ENCODE measurements at regions of chr3 and their contacts with region 1.

Region 1: GRCh38 chr3:48989796-48990635 is at the start of gene P4HTM:
- DNase-seq: peak; percentile 87
- H3K4me3 ChIP-seq: peak within 1 kb of the TSS; percentile 80
- H3K27ac ChIP-seq: peak within 1 kb of the TSS; percentile 99
- H3K27me3 ChIP-seq: no peaks in the 10 kb centered on the region
- CTCF ChIP-seq: peak; percentile 59
- polyA plus RNA-seq, gene P4HTM: 18.2 and 22.5 TPM in 2 replicates

Region 2: GRCh38 chr3:48974076-48974864 is 15.7 kb before region 1 on chr3:
- CTCF ChIA-PET with region 1: interaction called, 12 read pairs
- POLR2A ChIA-PET with region 1: no interaction called
- DNase-seq: no peak
- H3K4me3 ChIP-seq: no peak overlapping the region
- H3K27ac ChIP-seq: no peak overlapping the region
- H3K27me3 ChIP-seq: no peaks in the 10 kb centered on the region
- CTCF ChIP-seq: no peak

Region 3: DNA sequence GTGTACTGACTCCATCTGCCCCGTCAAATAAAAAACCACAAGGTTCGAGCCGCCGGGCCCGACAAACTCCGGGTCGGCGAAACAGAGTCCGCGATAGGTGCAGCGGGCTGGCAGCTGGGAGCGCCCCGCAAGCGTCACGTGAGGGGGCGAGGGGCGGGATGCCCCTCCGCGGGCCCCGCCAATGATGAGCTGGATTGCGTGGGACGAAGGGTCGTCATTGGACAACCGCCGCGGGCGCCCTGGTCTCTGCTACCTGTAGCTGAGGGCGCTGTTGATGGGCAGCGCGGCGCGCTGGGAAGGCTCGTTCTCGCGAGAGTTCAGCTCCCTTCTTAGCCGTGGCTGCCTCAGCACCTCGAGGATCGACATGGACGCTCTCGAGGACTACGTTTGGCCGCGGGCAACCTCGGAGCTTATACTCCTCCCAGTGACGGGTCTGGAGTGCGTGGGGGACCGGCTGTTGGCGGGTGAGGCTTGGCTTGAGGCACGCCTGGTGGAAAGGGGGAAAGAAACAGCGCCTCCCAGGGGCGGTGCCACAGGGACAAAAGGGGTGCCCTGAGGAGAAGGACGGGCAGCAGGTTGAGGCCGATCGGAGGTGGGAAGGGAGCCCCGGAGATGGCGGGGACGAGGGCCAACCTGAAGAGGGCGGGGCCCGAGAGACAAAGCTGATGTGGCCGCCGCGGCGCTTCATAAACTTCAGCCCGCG is 17.2 kb after region 1 on chr3 and contains the start of gene WDR6:
- CTCF ChIA-PET with region 1: interaction called, 18 read pairs
- POLR2A ChIA-PET with region 1: interaction called, 70 read pairs
- DNase-seq: peak; percentile 96
- H3K4me3 ChIP-seq: peak within 1 kb of the TSS; percentile 93
- H3K27ac ChIP-seq: peak within 1 kb of the TSS; percentile 98
- H3K27me3 ChIP-seq: no peaks in the 10 kb centered on the region
- CTCF ChIP-seq: peak; percentile 35; the same call in 1 of the 2 replicates
- polyA plus RNA-seq, gene WDR6: 101 and 117 TPM in 2 replicates

Region 4: GRCh38 chr3:49013755-49014628 is 24.0 kb after region 1 on chr3:
- CTCF ChIA-PET with region 1: interaction called, 19 read pairs
- POLR2A ChIA-PET with region 1: interaction called, 6 read pairs
- DNase-seq: no peak
- H3K4me3 ChIP-seq: no peak overlapping the region
- H3K27ac ChIP-seq: no peak overlapping the region
- H3K27me3 ChIP-seq: no peaks in the 10 kb centered on the region
- CTCF ChIP-seq: peak; percentile 67

Region 5: DNA sequence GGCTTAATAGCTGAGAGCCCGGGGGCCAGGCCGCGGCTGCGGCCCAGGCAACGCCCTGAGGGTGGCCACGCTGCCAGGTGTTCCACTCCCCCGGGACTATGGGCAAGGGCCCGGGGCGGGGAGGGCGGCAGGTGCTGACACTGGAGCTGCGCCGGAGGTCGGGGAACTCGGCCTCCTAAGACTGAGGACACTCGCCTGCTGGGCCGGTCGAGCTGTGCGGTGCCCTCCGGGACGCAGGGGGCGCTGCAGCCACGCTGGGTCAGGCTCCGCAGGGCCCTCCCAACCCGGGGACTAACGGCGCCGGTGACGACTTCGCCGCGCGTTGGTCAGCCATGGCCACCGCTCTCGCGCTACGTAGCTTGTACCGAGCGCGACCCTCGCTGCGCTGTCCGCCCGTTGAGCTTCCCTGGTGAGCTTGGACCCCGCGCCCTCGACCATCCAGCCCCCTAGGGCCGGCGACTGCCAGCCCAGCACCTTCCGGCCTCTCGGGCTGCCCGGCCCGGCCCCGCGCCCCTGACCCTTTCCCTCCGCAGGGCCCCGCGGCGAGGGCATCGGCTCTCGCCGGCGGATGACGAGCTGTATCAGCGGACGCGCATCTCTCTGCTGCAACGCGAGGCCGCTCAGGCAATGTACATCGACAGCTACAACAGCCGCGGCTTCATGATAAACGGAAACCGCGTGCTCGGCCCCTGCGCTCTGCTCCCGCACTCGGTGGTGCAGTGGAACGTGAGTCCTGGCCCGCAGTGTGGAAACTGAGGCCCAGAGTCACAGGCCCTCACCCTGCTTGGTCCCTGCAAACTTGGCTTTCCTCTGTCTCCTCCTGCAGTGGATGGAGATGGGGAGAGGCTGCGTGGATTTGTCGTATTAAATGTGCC is 32.0 kb after region 1 on chr3 and contains the start of gene NDUFAF3:
- CTCF ChIA-PET with region 1: interaction called, 8 read pairs
- POLR2A ChIA-PET with region 1: interaction called, 26 read pairs
- DNase-seq: peak; percentile 81
- H3K4me3 ChIP-seq: peak within 1 kb of the TSS; percentile 98
- H3K27ac ChIP-seq: peak within 1 kb of the TSS; percentile 90
- H3K27me3 ChIP-seq: no peaks in the 10 kb centered on the region
- CTCF ChIP-seq: peak; percentile 90
- polyA plus RNA-seq, gene NDUFAF3: 47.0 and 69.2 TPM in 2 replicates

Region 6: GRCh38 chr3:49028673-49029562 is 38.9 kb after region 1 on chr3 and contains the start of gene IMPDH2:
- CTCF ChIA-PET with region 1: no interaction called
- POLR2A ChIA-PET with region 1: interaction called, 11 read pairs
- DNase-seq: peak; percentile 81
- H3K4me3 ChIP-seq: peak within 1 kb of the TSS; percentile 87
- H3K27ac ChIP-seq: peak within 1 kb of the TSS; percentile 68
- H3K27me3 ChIP-seq: no peaks in the 10 kb centered on the region
- CTCF ChIP-seq: no peak
- polyA plus RNA-seq, gene IMPDH2: 268 and 284 TPM in 2 replicates